Pancreas (tissue), 10 donors: ENCODE measurements at regions of chr18 and their contacts with region 1.

Region 1: GRCh38 chr18:35231052-35231451 is 9.8 kb upstream of the ZNF397 start:
- DNase-seq: peak; percentile 68 to 86 (median 78)
- ATAC-seq: peak; percentile 89 to 100 (median 98)
- H3K4me3 ChIP-seq: peak overlapping the region in 1 of 4 donors; percentile 22
- H3K27ac ChIP-seq: no peak overlapping the region
- H3K4me1 ChIP-seq: no peaks in the 10 kb centered on the region
- H3K27me3 ChIP-seq: no peaks in the 10 kb centered on the region
- CTCF ChIP-seq: peak; percentile 87 to 96 (median 92)

Region 2: DNA sequence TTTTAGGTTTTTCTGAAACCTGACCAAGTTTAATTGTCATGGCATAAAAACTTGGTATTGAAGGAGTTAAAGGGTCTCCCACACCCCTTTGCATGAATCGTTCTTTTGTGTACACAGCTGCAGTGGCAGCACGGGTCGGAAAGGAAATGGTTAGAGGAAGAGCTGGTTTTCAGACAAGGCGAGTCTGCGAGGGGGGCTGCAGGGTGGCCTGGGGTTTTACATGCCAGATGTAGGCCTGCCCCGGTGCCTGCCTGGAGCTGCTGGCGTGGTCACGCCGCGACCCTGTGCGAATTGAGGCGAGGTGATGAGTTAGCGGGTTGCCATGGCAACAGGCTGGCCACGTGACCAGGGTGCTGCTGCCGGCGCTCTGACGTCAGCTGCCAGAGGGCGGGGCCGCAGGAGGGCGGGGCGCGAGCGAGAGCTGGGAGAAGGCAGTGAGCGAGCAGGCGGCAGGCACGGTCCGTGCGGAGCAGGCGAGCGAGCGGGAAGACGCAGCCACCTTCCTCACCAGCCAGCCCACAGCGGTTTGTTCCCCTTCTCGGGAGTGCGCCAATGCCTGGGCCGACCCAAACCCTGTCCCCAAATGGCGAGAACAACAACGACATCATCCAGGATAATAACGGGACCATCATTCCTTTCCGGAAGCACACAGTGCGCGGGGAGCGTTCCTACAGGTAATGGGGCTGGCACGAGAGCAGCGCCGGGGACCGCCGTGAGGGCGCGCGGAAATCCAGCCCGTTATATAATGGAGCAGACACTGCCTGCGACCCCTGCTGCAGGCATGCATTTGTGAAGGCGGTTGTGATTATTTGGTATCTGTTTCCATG is 189.9 kb before region 1 on chr18 and contains the start of gene MAPRE2:
- intact Hi-C with region 1: no loop called
- DNase-seq: peak; percentile 98 to 100 (median 98)
- ATAC-seq: peak; percentile 96 to 98 (median 97)
- H3K4me3 ChIP-seq: peak within 1 kb of the TSS; percentile 55 to 78 (median 74)
- H3K27ac ChIP-seq: peak within 1 kb of the TSS; percentile 70 to 84 (median 78)
- H3K4me1 ChIP-seq: peaks cover 0 to 17% (median 0%) of the 10 kb centered on the region in 3 donors
- H3K27me3 ChIP-seq: no peaks in the 10 kb centered on the region
- CTCF ChIP-seq: no peak
- total RNA-seq, gene MAPRE2: 8.4 to 18.2 (median 10.6) TPM

Region 3: DNA sequence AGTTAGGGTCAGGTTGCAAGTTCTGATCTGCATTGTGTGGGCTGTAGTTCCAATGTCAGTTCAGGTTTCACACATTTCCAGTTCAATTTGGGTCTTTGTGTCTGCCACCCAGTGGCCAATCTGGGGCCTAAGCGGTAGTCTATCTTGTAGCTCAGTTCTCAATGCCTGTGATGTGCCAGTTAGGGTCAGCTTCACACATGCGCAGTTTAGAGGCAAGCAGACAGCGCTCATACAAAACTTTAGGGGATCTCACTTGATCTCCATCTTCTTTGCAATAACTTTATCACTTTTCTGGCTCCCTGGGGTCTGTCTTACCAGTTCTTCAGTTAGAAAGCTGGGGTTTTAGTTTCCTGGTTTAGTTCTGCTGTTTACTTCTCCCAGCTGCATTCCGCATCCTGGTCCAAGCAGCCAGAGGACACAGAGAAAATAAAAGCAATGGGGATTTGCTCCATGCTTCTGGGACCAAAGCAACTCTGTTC is 124.1 kb after region 1 on chr18:
- intact Hi-C with region 1: loop called (anchors 5 to 10 kb)
- DNase-seq: peak; percentile 58 to 79 (median 64)
- ATAC-seq: peak; percentile 97 to 100 (median 100)
- H3K4me3 ChIP-seq: no peak overlapping the region
- H3K27ac ChIP-seq: no peak overlapping the region
- H3K4me1 ChIP-seq: no peaks in the 10 kb centered on the region
- H3K27me3 ChIP-seq: no peaks in the 10 kb centered on the region
- CTCF ChIP-seq: peak; percentile 47 to 58 (median 55)